ENCODE measurements at regions of chr6 and their contacts with region 1.

Region 1: GRCh38 chr6:149147938-149148718 is 169.4 kb upstream of the TAB2 start:
- DNase-seq: peak; percentile 41
- H3K4me3 Mint-ChIP-seq: peak overlapping the region; percentile 31
- H3K27ac Mint-ChIP-seq: peak overlapping the region; percentile 97
- H3K4me1 Mint-ChIP-seq: peaks cover 73% of the 10 kb centered on the region
- H3K27me3 Mint-ChIP-seq: no peaks in the 10 kb centered on the region

Region 2: DNA sequence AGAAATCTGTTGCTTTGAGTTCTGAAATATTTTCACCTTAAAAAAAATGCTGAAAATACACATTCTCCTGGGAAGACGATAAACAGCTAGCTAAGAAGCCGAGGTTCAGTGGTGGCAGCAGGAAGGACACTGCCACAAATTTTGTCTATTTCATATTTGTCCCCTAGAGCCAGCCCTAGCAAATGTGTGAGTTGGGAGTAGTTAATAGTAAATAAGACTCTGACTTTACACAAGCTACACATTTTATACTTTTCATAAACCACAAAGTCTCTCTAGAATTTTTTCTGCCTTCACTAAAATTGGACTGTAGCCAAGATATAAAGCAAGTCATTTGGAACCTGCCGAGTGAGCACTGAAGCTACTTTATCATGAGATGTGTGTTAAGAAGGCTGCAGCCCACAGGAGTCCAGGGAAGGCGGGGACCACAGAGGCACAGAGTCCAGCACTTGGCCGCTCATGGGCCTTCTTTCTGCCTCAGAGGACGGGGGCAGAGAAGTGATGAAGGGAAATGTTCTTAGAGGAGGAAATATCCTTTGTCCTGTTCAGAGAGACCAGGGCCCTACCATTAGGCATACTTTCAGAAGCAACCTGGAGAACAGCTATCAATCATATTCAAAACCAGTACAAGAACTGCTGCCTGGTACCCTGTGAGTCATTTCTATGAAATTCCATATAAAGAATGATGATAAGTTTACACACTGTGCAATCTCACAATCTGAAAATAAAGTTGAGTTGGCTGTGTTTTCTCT is 72.3 kb before region 1 on chr6:
- intact Hi-C with region 1: loop called (anchors 1 kb)
- DNase-seq: no peak
- H3K4me3 Mint-ChIP-seq: no peak overlapping the region
- H3K27ac Mint-ChIP-seq: peak overlapping the region; percentile 85
- H3K4me1 Mint-ChIP-seq: peaks cover 48% of the 10 kb centered on the region
- H3K27me3 Mint-ChIP-seq: no peaks in the 10 kb centered on the region

Region 3: DNA sequence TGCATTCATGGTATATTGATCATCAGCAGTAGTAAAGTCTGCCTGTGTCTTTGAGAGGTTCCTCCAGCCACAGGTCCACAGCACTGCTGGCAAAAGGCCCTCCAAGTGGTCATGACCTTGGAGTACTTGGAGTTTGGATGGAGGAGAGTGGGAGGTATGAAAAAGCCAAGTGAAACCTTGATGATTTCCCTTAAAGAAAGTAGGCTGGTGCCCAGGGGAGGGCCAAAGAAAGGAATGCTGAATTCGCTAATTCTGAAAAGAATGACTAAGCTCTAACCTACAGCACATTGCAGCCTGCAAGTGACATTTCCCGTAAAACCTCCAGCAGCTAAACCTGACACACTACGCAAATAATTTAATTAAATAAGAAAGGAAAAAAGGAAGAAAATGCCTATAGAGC is 54.0 kb before region 1 on chr6:
- intact Hi-C with region 1: loop called (anchors 2 kb)
- DNase-seq: no peak
- H3K4me3 Mint-ChIP-seq: peak overlapping the region; percentile 50
- H3K27ac Mint-ChIP-seq: peak overlapping the region; percentile 84
- H3K4me1 Mint-ChIP-seq: peaks cover 63% of the 10 kb centered on the region
- H3K27me3 Mint-ChIP-seq: no peaks in the 10 kb centered on the region

Region 4: GRCh38 chr6:149389509-149390297 is 241.6 kb after region 1 on chr6:
- intact Hi-C with region 1: loop called (anchors 5 kb)
- DNase-seq: no peak
- H3K4me3 Mint-ChIP-seq: no peak overlapping the region
- H3K27ac Mint-ChIP-seq: peak overlapping the region; percentile 9
- H3K4me1 Mint-ChIP-seq: peaks cover 60% of the 10 kb centered on the region
- H3K27me3 Mint-ChIP-seq: no peaks in the 10 kb centered on the region

Region 5: DNA sequence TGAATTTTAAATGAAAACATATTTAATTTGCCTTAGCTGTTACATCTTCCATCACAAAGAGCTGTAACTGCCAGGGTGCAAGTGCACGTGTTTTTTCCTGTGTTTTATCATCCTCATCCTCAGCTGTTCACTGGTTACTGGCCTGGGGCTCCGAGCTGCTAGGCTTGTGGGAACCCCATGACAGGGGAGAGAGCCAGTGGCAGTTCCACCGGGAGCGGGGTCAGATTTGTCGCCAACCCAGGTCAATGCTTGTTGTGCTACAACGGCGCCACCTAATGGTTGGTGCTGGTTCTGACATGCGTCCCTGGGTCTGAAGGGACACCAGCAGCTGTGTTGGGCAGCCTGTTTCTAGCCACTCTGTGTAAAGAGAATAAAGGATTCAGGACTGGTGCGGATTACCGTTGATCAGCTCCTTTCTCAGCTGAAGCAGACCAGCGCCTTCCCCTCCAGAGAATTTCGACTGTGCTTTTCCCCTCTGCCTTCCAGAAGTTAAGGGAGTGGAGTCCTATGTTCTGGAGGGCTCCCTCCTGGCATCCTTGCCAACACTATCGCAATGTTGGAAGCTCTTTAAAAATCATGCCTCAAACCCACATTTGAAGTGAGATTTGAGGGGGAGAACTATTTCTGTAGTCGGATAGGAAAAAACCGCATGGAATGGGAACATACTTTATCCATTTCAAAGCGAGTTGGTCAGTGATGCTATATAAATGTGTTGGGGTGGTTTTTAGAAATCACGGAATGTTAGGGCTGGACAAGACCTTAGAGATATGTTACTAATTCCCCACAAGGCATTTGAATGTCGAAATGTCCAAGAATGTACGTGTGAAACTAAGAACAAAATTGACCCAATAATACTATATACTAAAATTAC is 284.0 kb after region 1 on chr6:
- intact Hi-C with region 1: loop called (anchors 5 kb)
- DNase-seq: peak; percentile 78
- H3K4me3 Mint-ChIP-seq: no peak overlapping the region
- H3K27ac Mint-ChIP-seq: peak overlapping the region; percentile 64
- H3K4me1 Mint-ChIP-seq: peaks cover 14% of the 10 kb centered on the region
- H3K27me3 Mint-ChIP-seq: no peaks in the 10 kb centered on the region

Region 6: GRCh38 chr6:149513915-149514314 is 365.8 kb after region 1 on chr6:
- intact Hi-C with region 1: no loop called
- DNase-seq: no peak
- H3K4me3 Mint-ChIP-seq: no peak overlapping the region
- H3K27ac Mint-ChIP-seq: no peak overlapping the region
- H3K4me1 Mint-ChIP-seq: peaks cover 39% of the 10 kb centered on the region
- H3K27me3 Mint-ChIP-seq: no peaks in the 10 kb centered on the region